ENCODE measurements at regions of chr2 and their contacts with region 1.

Region 1: DNA sequence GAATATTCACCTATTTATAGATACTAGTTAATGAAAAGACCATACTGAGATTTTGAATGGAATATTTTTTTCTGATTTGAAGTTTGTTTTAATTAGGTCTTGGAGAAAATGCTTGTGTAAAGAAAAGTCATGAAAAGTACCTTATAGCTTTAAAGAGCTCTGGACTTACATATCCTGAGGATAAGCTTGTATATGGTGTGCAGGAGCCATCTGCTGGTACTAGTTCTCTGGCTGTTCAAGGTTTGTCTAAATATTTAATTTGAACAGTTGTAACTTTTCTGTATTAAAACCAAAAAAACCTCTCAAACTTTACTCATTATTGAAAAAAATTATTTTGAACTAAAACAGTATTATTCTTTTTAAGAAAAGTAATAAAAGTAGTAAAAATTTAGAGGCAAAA is 50.1 kb downstream of the UBR3 start:
- DNase-seq: no peak
- ATAC-seq: no peak
- H3K4me3 ChIP-seq: no peak overlapping the region
- H3K27ac ChIP-seq: no peak overlapping the region
- H3K4me1 ChIP-seq: no peaks in the 10 kb centered on the region
- H3K27me3 ChIP-seq: no peaks in the 10 kb centered on the region

Region 2: DNA sequence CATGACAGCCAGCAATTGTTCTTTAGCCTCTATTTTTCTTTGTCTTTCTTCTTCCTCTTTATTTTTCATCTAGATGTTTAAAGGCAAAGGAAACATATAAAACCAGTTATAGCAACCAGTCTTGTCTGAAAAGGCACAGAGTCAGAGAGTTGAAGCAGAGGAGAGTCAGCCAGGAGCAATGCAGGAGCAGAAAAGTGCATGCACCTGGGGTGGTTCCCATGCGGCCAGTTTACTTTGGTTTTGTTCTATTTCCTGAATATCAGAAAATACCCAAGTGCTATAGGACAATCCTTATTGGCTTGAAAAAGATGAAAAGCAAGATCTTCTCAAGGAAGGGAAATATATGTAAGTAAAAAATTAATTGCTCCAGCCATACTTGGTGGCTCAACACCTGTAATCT is 228.1 kb before region 1 on chr2:
- intact Hi-C with region 1: no loop called
- DNase-seq: no peak
- ATAC-seq: no peak
- H3K4me3 ChIP-seq: no peak overlapping the region
- H3K27ac ChIP-seq: no peak overlapping the region
- H3K4me1 ChIP-seq: no peaks in the 10 kb centered on the region
- H3K27me3 ChIP-seq: no peaks in the 10 kb centered on the region

Region 3: GRCh38 chr2:169824373-169825333 is 52.7 kb before region 1 on chr2 and contains the start of gene METTL5:
- intact Hi-C with region 1: loop called in 1 of 2 experiments (anchors 10 kb)
- DNase-seq: peak; percentile 84 to 94
- ATAC-seq: peak; percentile 93
- H3K4me3 ChIP-seq: peak within 1 kb of the TSS; percentile 37 to 62
- H3K27ac ChIP-seq: peak within 1 kb of the TSS in 1 of 2 donors; percentile 39
- H3K4me1 ChIP-seq: peaks cover 0 to 3% of the 10 kb centered on the region in 2 donors
- H3K27me3 ChIP-seq: no peaks in the 10 kb centered on the region
- total RNA-seq, gene METTL5: 45.8 to 60.7 TPM

Region 4: DNA sequence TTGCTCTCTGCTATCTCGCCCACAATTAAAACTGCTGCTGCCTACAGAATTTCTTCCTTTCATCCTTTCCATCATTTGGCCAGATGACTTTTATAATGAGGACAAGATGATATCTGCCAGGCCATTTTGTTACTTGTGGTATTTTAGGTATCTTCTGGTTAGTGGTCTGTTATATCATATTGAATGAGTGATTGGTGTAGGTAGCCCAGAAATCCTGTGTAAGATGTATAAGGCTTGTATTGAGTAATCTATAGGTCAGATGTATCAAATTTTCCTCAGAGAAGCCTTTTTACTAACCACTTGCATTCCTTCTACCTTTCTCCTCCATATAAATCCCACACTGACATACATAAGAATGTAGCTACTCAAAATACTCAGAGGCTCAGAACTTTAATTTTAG is 68.1 kb after region 1 on chr2:
- intact Hi-C with region 1: no loop called
- DNase-seq: no peak
- ATAC-seq: no peak
- H3K4me3 ChIP-seq: no peak overlapping the region
- H3K27ac ChIP-seq: no peak overlapping the region
- H3K4me1 ChIP-seq: no peaks in the 10 kb centered on the region
- H3K27me3 ChIP-seq: no peaks in the 10 kb centered on the region